Activated CD8-positive, alpha-beta T cell treated with anti-CD3 and anti-CD28 coated beads, Interleukin-2, amount 10 ng/mL, durations not matched to agents 7 days and 5 days (primary cell): ENCODE measurements at regions of chr19 and their contacts with region 1.

Region 1: DNA sequence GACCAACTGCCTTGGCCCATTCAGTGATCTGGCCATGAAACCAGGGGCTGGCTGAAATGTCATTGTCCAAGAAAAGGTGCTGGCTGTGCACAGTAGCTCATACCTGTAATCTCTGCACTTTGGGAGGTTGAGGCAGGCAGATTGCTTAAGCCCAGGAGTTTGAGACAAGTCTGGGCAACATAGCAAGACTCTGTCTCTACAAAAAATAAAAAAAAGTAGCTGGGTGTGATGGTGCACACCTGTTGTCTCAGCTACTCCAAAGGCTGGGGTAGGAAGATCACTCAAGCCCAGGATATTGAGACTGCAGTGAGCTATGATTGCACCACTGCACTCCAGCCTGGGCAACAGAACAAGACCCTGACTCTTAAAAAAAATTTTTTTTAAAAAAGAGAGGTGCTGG is 28.6 kb upstream of the C19orf12 start:
- DNase-seq: no peak
- ATAC-seq: no peak
- H3K4me3 Mint-ChIP-seq: no peak overlapping the region
- H3K27ac Mint-ChIP-seq: no peak overlapping the region
- H3K4me1 Mint-ChIP-seq: no peaks in the 10 kb centered on the region
- H3K27me3 Mint-ChIP-seq: no peaks in the 10 kb centered on the region

Region 2: GRCh38 chr19:29731331-29731850 is 12.3 kb before region 1 on chr19:
- CTCF ChIA-PET with region 1: interaction called, 12 read pairs
- POLR2A ChIA-PET with region 1: no interaction called
- DNase-seq: no peak
- ATAC-seq: no peak
- H3K4me3 Mint-ChIP-seq: no peak overlapping the region
- H3K27ac Mint-ChIP-seq: no peak overlapping the region
- H3K4me1 Mint-ChIP-seq: no peaks in the 10 kb centered on the region
- H3K27me3 Mint-ChIP-seq: peaks cover 23% of the 10 kb centered on the region

Region 3: DNA sequence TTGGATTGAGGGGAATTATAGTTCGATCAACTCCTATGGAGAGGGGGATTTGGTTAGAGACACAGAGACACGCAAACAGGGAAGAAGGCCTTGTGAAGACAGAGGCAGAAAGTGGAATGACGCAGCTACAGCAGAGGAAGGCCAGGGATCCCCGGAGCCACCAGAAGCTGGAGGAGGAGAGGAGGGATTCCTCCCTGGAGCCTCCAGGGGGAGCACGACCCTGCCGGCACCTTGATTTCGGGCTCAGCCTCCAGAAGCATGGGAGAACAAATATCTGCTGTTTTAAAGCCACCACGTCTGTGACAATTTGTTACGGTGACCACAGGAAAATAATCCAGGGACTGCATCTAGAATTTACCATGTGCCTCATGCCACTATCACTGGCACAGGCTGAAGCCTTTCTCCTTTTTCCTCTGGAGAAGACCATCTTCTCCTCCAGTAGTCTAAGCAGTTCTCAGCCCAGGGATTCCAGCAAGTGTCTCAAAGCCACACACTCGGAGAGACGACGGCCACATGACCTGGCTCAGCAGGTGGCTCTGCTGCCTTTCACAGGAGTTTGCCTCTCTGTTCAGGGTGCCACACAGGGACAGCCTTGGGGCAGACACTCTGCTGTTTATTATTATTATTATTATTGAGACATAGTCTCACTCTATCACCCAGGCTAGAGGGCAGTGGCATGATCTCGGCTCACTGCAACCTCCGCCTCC is 28.2 kb after region 1 on chr19:
- CTCF ChIA-PET with region 1: no interaction called
- POLR2A ChIA-PET with region 1: no interaction called
- DNase-seq: peak; percentile 31
- ATAC-seq: peak; percentile 43
- H3K4me3 Mint-ChIP-seq: no peak overlapping the region
- H3K27ac Mint-ChIP-seq: no peak overlapping the region
- H3K4me1 Mint-ChIP-seq: peaks cover 13% of the 10 kb centered on the region
- H3K27me3 Mint-ChIP-seq: no peaks in the 10 kb centered on the region